ENCODE measurements at regions of chr7 and their contacts with region 1.

Region 1: DNA sequence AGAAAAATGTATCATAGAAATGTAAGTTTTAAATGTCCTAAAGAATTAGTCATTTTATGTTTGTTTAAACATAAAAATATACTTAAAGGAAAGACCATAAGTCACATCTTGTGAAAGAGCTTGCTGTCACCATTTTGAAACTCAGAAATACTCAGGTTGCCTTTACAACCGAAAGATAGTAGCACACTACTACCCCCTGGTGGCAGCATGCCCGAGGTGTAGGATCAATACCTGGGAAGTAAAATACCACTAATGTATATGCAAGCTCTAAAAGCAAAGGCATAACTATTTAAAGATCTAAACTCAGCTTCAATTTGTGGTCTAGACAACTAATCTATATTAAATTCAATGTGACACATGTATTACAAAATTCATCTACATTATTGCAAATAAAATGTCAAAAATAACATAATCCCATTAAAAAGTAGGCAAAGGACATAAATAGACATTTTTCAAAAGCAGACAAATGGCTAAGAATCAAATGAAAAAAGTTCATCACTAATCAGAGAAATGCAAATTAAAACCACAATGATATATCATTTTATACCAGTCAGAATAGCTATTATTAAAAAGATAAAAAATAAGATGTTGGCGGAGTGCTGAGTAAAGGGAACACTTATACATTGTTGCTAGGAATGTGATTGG is 47.7 kb upstream of the FGL2 start:
- DNase-seq: no peak

Region 2: DNA sequence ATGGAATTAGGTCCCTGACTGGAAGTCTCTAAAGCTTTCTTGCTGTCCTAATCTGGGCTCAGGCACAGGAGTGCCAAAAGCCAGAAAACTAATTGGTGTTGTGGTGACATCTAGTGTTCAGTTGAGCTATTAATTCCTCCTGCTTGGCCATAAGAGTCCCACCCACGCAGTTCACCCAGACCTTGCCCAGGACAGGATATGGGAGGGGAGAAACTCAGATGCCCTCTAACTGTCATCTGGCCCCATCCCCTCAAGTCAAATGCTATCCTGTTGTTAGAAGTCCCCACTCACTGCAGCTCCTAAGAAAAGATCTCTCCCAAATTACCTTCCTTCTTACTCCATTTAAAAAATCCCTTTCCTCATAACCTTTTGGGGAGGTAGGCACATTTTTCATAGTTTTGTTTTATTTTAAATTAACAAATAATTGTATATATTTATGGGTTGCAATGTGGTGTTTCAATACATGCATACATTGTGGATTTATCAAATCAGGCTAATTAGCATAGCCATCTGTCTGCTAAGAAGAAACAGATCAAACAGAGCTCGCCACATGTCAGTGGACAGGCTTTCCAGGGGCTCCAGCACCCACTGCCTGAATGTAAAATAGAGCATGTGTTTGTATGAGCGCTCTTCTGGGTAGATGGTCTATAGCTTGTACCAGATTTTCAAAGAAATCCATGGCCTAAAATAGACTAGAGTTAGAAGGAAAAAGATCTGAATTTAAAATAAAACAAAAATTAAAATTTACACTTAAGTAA is 84.8 kb after region 1 on chr7:
- intact Hi-C with region 1: loop called (anchors 5 kb)
- DNase-seq: no peak

Measured in cardiac septum (tissue), 1 donor.